A673 (cell line): ENCODE measurements at regions of chr5 and their contacts with region 1.

Region 1: DNA sequence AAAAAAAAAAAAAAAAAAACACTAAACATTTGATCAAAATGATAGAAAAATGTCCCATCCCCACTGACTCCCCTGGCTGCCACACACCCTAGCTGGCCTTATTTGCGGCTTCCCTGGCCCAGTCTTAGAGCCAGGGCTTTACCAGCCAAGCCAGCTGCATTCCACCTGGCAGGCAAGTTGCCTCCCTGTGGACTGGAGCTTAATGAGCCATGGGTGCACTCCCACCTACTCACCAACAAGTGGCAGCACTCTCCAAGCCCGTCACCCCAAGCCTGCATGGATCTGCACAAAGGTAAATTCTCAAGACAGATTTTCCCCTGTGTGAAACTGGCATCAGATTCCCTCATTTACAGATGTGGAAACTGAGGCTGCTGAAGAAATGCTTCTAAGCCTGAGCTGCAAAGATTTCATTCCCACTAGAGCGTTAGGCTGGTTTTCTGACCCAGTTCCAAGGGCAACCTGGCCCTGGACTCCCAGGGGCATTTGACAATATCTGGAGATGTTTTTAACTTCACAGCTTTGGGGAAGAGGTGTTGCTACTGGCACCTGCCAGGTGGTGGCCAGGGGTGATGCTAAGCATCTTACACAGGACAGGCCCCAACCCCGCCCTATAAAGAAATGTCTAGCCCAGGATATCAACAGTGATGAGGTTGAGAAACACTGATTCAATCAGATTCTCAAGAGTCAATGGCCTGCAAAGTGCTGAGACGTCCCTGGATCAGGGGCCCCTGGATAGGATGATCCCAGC is 21.9 kb upstream of the VDAC1 start:
- DNase-seq: peak; percentile 81
- H3K4me3 ChIP-seq: no peak overlapping the region
- H3K27ac ChIP-seq: no peak overlapping the region
- H3K4me1 ChIP-seq: no peaks in the 10 kb centered on the region
- H3K27me3 ChIP-seq: no peaks in the 10 kb centered on the region
- CTCF ChIP-seq: peak; percentile 71

Region 2: DNA sequence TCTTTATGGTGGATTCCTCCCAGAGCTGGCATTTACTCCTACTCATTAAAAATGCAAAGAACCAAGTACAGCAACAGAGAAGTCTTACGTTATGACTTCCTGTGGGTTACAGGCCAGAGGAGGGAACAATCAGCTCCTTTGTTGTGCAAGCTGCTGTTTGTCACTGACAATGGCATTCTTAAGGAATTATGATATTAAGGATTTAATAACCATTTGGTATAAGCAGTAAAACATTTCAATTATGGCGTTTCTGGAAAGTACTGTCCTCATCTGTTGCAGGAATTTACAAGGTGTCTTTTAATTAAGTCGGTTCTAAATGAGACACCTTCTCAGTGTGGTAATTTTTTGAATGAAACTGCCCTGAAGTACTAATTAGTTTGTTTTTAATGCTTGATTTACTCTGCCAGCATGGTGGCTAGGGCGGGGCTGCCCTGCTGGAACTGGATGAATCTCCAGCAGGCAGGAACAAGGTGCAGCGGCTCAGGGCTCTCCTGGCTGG is 27.2 kb after region 1 on chr5:
- CTCF ChIA-PET with region 1: no interaction called
- POLR2A ChIA-PET with region 1: interaction called, 19 read pairs
- intact Hi-C with region 1: no loop called
- DNase-seq: peak; percentile 93
- H3K4me3 ChIP-seq: no peak overlapping the region
- H3K27ac ChIP-seq: peak overlapping the region; percentile 25
- H3K4me1 ChIP-seq: peaks cover 17% of the 10 kb centered on the region
- H3K27me3 ChIP-seq: no peaks in the 10 kb centered on the region
- CTCF ChIP-seq: no peak

Region 3: DNA sequence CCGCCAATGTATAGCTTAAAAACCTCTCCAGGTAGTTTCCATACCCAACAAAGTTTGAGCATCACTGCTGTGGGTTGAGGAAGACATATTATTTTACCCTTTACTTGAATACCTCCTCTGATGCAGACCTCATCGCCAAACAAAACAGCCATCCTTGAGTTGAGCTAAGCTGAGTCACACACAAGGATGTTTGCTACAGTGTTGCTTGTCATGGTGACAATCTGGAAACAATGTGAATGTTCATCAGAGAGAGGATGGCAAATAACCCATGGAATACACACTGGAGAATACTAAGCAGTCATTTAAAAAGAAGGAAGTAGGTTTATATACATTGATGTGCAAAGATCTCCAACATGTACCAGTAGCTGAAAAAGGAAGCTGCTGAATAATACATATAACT is 46.7 kb after region 1 on chr5:
- CTCF ChIA-PET with region 1: interaction called, 11 read pairs
- POLR2A ChIA-PET with region 1: no interaction called
- intact Hi-C with region 1: no loop called
- DNase-seq: no peak
- H3K4me3 ChIP-seq: no peak overlapping the region
- H3K27ac ChIP-seq: no peak overlapping the region
- H3K4me1 ChIP-seq: no peaks in the 10 kb centered on the region
- H3K27me3 ChIP-seq: peaks cover 6% of the 10 kb centered on the region
- CTCF ChIP-seq: no peak